Sciatic nerve (tissue), 2 donors: ENCODE measurements at regions of chr11 and their contacts with region 1.

Region 1: GRCh38 chr11:11946180-11946579 is 62.2 kb downstream of the DKK3 start:
- DNase-seq: no peak
- ATAC-seq: no peak

Region 2: DNA sequence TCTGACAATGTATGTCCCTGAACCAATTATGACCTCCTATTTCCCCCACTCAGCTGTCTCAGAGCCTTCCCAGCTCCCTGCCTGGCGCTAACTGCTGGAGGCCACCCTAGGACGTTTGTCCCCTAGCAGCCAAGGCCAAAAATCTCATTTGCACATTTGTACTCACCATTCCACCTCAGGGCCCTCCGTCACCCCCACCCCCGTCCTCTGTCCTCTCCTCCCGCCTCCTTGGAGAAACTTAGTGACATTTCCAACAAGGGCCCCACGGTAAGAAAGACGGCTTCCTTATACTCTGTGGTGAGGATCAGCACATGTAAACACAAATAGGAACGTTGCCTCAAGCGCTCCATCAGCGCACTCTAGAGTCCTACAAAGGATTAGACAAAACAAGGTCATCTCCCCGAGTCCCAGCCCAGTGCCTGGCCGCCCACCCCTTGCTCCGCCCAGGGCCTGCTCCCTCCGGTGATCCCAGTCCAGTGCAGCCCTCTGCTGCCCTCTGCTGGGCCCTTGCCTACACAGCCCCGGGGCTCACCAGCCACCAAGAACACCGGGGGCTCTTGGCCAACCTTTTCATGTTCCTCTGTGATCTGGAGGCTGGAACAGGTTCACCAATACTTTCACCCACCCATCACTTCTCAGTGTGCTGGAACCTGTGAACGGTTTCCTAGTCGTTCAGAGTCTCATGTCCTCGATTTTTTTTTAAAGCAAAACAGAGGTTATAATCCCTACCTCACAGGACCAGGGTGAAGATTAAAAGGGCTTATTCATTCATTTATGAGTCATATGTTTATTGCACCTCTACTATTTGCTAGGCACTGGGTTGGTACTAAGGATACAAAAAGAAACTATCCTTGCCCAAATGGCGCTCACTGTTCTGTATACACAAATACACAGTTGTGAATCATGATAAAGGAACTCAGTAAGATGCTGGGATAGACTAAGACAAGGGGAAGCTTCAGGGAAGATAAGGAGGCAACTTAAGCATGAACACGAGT is 1210.4 kb before region 1 on chr11:
- intact Hi-C with region 1: no loop called
- DNase-seq: peak; percentile 97
- ATAC-seq: peak; percentile 99

Region 3: GRCh38 chr11:12174477-12175143 is 228.4 kb after region 1 on chr11:
- intact Hi-C with region 1: no loop called
- DNase-seq: no peak
- ATAC-seq: no peak

Region 4: DNA sequence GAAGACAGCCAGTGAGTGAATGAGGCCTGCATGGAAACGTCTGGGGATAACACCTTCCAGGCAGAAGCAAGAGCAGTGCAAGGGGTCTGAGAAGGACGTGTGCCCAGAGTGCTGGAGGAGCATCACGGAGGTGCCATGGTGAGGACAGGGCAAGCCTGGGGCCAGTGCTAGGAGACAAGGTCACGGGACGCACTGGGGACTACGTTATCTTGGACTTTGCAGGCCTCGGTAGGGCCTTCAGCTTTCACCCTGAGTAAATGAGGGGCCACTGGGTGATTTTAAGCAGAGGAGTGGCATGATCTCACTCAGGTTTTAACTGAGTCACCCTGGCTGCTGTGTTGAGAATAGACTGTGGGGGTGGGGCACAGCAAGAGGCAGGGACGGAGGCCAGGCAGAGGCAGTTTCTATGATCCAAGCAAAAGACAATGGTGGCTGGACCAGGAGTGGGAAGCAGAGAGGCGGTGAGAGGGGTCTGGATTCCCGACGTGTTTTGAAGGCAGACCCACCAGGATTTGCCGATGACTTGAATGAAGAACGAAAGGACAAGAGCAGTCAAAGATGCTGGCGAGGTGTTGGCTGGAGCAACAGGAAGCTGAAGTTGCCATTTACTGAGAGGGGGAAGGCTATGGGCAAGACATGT is 328.5 kb after region 1 on chr11:
- intact Hi-C with region 1: loop called (anchors 10 kb)
- DNase-seq: peak; percentile 47
- ATAC-seq: no peak